ENCODE measurements at regions of chr13 and their contacts with region 1.

Region 1: GRCh38 chr13:57877601-57878000 is 246.1 kb downstream of the PCDH17 start:
- DNase-seq: no peak
- ATAC-seq: no peak
- H3K4me3 ChIP-seq: no peak overlapping the region
- H3K4me3 Mint-ChIP-seq: no peak overlapping the region
- H3K27ac ChIP-seq: no peak overlapping the region
- H3K27ac Mint-ChIP-seq: no peak overlapping the region
- H3K4me1 ChIP-seq: no peaks in the 10 kb centered on the region
- H3K4me1 Mint-ChIP-seq: no peaks in the 10 kb centered on the region
- H3K27me3 ChIP-seq: no peaks in the 10 kb centered on the region
- H3K27me3 Mint-ChIP-seq: no peaks in the 10 kb centered on the region
- CTCF ChIP-seq: no peak

Region 2: DNA sequence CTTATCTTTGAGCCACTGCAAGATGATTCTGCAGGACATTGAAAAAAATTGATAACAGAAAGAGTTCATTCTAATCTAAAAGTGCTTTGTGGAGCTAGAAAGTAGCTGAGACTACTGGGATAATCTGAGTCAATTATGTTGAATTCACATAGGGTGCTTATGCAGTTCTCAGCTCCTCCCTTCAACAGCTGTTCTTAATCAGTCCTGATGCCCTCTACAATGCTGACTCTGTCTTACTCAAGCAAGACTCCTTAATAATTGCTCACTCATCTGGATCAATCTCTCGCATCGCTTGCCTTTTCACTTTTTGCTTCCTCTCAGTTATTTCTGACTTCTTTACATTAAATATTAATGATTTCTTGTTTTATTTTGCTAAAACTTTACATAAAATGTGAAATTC is 64.0 kb before region 1 on chr13:
- CTCF ChIA-PET with region 1: no interaction called
- POLR2A ChIA-PET with region 1: no interaction called
- intact Hi-C with region 1: loop called in 1 of 2 experiments (anchors 2 kb)
- DNase-seq: no peak
- ATAC-seq: no peak
- H3K4me3 ChIP-seq: no peak overlapping the region
- H3K4me3 Mint-ChIP-seq: no peak overlapping the region
- H3K27ac ChIP-seq: no peak overlapping the region
- H3K27ac Mint-ChIP-seq: no peak overlapping the region
- H3K4me1 ChIP-seq: no peaks in the 10 kb centered on the region
- H3K4me1 Mint-ChIP-seq: no peaks in the 10 kb centered on the region
- H3K27me3 ChIP-seq: no peaks in the 10 kb centered on the region
- H3K27me3 Mint-ChIP-seq: no peaks in the 10 kb centered on the region
- CTCF ChIP-seq: no peak

Region 3: DNA sequence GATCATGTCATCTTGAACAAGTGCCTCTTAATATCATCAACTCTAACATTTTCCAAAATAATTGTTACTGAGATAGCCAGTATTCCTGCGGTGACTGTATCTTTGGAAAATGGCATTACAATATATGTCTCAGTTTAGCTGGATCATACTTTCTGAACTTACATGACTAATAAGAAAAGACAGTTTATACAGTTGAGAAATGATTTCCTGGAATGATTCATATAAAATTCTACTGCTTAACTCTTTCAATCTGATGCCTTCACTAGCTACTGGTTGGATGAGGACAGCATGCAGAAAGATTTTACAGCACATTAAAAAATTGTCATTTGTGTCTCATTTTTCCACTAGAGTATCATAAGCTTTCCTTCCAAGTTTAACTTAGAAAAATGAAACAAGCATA is 56.0 kb after region 1 on chr13:
- CTCF ChIA-PET with region 1: no interaction called
- POLR2A ChIA-PET with region 1: no interaction called
- intact Hi-C with region 1: no loop called
- DNase-seq: no peak
- ATAC-seq: no peak
- H3K4me3 ChIP-seq: no peak overlapping the region
- H3K4me3 Mint-ChIP-seq: no peak overlapping the region
- H3K27ac ChIP-seq: no peak overlapping the region
- H3K27ac Mint-ChIP-seq: no peak overlapping the region
- H3K4me1 ChIP-seq: no peaks in the 10 kb centered on the region
- H3K4me1 Mint-ChIP-seq: no peaks in the 10 kb centered on the region
- H3K27me3 ChIP-seq: no peaks in the 10 kb centered on the region
- H3K27me3 Mint-ChIP-seq: no peaks in the 10 kb centered on the region
- CTCF ChIP-seq: no peak